Heart left ventricle (tissue), 16 donors: ENCODE measurements at regions of chr14 and their contacts with region 1.

Region 1: DNA sequence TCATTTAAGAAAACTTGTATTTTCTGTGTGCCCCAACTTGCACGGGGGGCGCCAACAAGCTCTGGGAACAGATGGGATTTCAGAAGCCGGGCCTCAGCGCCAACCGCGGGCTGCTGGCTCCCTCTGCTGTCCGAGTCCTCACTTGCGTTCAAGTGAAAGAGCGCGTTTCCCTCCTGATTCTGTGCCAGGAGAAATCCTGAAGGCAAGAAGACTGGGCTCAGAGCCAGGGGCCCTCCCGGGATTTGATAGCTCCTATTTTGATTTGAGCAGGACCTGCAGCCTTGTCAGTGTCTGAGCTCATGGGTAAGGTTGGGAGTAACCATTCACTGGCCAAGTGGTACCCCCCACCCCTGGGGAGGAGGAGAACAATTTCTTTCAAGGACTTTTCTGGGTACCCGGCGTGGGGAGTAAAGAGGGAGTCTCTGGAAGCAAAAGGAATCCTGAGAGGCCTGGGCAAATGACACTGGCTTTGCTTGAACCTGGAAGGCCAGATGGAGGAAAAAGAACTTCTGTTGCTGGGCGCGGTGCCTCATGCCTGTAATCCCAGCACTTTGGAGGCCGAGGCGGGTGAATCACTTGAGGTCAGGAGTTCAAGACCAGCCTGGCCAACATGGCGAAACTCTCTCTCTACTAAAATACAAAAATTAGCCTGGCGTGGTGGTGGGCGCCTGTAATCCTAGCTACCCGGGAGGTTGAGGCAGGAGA is 179.0 kb upstream of the RGS6 start:
- DNase-seq: peak; percentile 90 to 95 (median 92)
- ATAC-seq: peak in 3 of 4 donors; percentile 85 to 90 (median 90)
- H3K4me3 ChIP-seq: peak overlapping the region in 4 of 12 donors; percentile 2 to 22 (median 12)
- H3K27ac ChIP-seq: peak overlapping the region in 2 of 12 donors; percentile 15 to 38
- H3K4me1 ChIP-seq: peaks cover 0 to 16% (median 2%) of the 10 kb centered on the region in 12 donors
- H3K27me3 ChIP-seq: no peaks in the 10 kb centered on the region
- CTCF ChIP-seq: peak; percentile 71 to 96 (median 94)
- POLR2A ChIP-seq: no peak

Region 2: DNA sequence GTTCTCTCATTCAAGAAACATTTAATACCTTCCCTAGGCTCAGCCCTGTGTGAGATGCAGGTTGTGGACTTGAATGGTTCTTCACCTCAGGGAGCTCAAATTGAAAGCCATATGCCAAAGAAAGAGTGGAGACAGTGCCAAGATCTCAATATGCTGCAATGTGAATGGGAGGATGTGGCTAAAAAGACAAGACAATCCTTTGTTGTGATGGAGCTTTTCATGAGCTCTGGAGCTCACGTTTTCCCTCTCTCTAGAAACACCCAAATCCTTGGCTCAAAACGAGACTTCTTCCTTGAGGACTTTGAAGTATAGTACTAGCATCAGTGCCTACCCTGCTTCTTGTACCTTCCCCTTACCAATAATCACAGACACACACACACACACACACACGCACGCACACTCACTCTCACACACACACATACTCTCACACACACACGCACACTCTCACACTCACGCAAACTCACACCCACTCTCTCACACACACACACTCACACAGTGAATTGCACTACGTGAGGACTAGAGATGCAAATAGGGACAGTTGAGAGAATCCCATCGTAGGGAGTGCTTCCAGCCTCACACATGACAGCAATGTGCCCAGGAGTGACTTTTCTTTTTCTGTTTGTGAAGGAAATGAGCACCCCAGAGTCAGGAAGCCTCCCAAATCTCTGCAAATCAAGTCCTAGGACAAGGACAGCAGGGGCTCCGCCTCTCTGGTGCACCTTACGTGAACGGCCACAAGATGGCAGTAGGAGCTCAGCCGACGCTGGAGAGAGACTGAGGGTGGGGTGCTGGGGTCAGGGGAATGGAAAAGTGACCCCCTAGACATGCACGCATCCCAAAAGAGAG is 614.6 kb before region 1 on chr14:
- intact Hi-C with region 1: loop called (anchors 1 to 2 kb)
- DNase-seq: peak; percentile 36 to 77 (median 47)
- ATAC-seq: peak; percentile 55 to 85 (median 72)
- H3K4me3 ChIP-seq: peak overlapping the region in 2 of 12 donors; percentile 7 to 28
- H3K27ac ChIP-seq: no peak overlapping the region
- H3K4me1 ChIP-seq: peaks cover 0 to 31% (median 0%) of the 10 kb centered on the region in 12 donors
- H3K27me3 ChIP-seq: no peaks in the 10 kb centered on the region
- CTCF ChIP-seq: peak; percentile 88 to 95 (median 92)
- POLR2A ChIP-seq: no peak

Region 3: GRCh38 chr14:71327691-71328090 is 425.6 kb before region 1 on chr14:
- intact Hi-C with region 1: loop called in 6 of 10 experiments (anchors 2 to 5 kb)
- DNase-seq: no peak
- ATAC-seq: no peak
- H3K4me3 ChIP-seq: no peak overlapping the region
- H3K27ac ChIP-seq: no peak overlapping the region
- H3K4me1 ChIP-seq: peaks cover 0 to 42% (median 0%) of the 10 kb centered on the region in 12 donors
- H3K27me3 ChIP-seq: no peaks in the 10 kb centered on the region
- CTCF ChIP-seq: no peak
- POLR2A ChIP-seq: no peak

Region 4: DNA sequence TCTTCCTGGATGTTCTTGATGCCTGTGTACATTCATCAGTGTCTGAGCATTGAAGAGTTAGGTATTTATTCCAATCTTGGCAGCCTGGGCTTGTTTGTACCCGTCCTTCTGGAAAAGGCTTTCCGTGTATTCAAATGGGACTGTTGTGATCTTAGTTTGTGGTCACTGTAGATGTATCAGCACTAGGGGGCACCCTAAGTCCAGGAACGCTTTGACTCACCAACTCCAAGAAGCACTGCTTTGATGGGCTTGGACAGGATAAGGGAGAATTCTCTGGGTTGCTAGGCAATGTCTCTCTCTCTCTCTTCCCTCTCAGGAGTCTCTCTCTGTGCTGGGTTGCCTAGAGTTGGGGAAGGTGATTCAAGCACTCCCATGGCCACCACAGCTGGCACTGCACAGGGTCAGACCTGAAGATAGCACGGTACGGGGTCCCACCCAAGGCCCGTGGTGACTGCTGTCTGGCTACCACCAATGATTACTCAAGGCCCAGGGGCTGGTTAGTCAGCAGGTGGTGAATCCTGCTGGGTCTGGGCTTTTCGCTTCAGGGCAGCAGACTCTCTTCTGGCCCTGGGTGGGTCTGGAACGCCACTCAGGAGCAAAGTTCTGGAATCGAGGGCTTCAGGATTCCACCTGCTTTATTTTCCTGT is 32.2 kb before region 1 on chr14:
- intact Hi-C with region 1: loop called in 6 of 10 experiments (anchors 1 to 2 kb)
- DNase-seq: peak in 3 of 5 donors; percentile 33 to 42 (median 41)
- ATAC-seq: peak; percentile 67 to 91 (median 82)
- H3K4me3 ChIP-seq: no peak overlapping the region
- H3K27ac ChIP-seq: no peak overlapping the region
- H3K4me1 ChIP-seq: no peaks in the 10 kb centered on the region
- H3K27me3 ChIP-seq: no peaks in the 10 kb centered on the region
- CTCF ChIP-seq: peak; percentile 37 to 68 (median 57)
- POLR2A ChIP-seq: no peak